MCF 10A (cell line): ENCODE measurements at regions of chr20 and their contacts with region 1.

Region 1: GRCh38 chr20:62772990-62773844 is 23.1 kb upstream of the MRGBP start:
- DNase-seq: peak; percentile 96
- H3K4me3 Mint-ChIP-seq: peak overlapping the region; percentile 58
- H3K27ac Mint-ChIP-seq: peak overlapping the region; percentile 84
- H3K4me1 Mint-ChIP-seq: peaks cover 41% of the 10 kb centered on the region
- H3K27me3 Mint-ChIP-seq: no peaks in the 10 kb centered on the region
- CTCF ChIP-seq: no peak

Region 2: GRCh38 chr20:62476056-62476838 is 297.0 kb before region 1 on chr20:
- CTCF ChIA-PET with region 1: no interaction called
- POLR2A ChIA-PET with region 1: no interaction called
- intact Hi-C with region 1: no loop called
- DNase-seq: no peak
- H3K4me3 Mint-ChIP-seq: no peak overlapping the region
- H3K27ac Mint-ChIP-seq: no peak overlapping the region
- H3K4me1 Mint-ChIP-seq: no peaks in the 10 kb centered on the region
- H3K27me3 Mint-ChIP-seq: peaks cover 39% of the 10 kb centered on the region
- CTCF ChIP-seq: no peak

Region 3: GRCh38 chr20:62652051-62652926 is 120.9 kb before region 1 on chr20:
- CTCF ChIA-PET with region 1: no interaction called
- POLR2A ChIA-PET with region 1: interaction called, 21 read pairs
- intact Hi-C with region 1: no loop called
- DNase-seq: peak; percentile 99
- H3K4me3 Mint-ChIP-seq: peak overlapping the region; percentile 72
- H3K27ac Mint-ChIP-seq: peak overlapping the region; percentile 98
- H3K4me1 Mint-ChIP-seq: peaks cover 11% of the 10 kb centered on the region
- H3K27me3 Mint-ChIP-seq: no peaks in the 10 kb centered on the region
- CTCF ChIP-seq: no peak

Region 4: DNA sequence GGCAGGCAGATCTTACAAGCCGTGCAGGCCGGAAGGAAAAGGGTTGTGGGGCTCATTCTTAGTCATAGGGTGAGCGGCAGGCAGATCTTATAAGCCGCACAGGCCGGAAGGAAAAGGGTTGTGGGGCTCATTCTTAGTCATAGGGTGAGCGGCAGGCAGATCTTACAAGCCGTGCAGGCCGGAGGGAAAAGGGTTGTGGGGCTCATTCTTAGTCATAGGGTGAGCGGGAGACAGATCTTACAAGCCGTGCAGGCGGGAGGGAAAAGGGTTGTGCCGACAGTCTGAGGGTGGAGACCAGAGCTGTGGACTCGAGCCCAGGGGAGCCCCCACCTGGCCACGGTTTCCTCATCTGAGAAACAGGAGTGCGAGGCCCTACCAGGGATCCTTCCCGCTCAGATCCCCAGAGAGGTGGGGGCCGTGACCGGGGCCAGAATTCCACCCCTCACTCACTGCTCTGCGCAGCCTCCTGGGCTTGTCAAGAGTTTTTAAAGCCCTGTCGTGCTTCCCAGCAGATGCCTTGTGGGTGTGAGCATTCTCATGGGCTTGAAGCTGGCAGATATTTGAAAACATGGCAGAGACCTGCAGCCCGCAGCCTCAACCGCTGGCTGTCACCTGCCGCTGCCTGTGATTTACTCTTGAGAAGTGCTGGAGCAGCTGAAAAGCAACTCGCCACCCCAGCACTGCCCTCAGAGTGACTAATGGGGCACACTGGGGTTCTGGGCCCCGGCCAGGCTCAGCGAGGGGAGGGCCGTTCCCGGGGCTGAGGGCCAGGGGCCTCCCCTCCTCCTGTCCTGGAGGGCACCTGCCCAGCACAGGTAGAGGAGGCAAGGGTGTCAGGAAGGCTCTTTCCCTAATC is 32.7 kb before region 1 on chr20:
- CTCF ChIA-PET with region 1: interaction called, 4 read pairs
- POLR2A ChIA-PET with region 1: interaction called, 49 read pairs
- intact Hi-C with region 1: no loop called
- DNase-seq: peak; percentile 96
- H3K4me3 Mint-ChIP-seq: peak overlapping the region; percentile 71
- H3K27ac Mint-ChIP-seq: peak overlapping the region; percentile 67
- H3K4me1 Mint-ChIP-seq: peaks cover 20% of the 10 kb centered on the region
- H3K27me3 Mint-ChIP-seq: no peaks in the 10 kb centered on the region
- CTCF ChIP-seq: no peak

Region 5: DNA sequence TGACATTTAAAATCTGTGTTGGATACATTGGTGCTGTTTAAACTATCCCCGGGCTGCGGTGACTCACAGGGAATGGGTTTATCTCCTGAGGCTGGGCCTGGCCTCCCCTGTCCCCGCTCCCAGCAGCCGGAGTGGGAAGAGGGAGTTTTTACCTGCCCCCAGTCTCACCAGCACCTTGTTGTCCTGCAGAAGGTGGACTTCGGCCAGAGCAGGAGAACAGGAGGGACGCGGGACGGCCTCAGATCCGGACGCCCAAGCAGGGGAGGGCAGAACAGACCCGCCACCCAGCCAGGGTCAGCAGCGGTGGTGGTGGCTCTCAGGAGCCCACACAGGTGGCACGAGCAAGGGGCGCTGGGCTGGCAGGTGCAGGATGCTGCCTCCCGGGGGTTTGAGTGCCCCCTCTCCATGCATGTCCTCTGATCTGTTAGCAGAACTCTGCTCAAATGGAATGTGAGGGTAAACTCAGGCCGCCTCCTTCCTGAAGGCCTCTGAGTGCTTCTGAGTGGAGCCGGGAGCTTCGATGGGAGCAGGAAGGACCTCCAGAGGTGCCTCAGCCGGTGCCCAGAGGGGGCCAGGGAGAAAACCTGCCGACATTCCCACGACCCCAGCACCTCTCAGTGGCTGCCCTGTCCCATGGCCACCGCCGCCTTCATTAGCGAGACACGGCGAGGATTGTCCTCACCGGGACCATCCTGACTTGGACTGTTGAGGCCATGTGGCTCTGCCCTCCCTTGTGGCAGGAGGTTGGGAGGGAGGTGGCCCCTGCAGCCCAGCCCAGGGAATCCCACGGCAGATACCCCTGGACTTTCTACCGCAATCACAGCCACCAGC is 20.3 kb before region 1 on chr20:
- CTCF ChIA-PET with region 1: interaction called, 4 read pairs
- POLR2A ChIA-PET with region 1: interaction called, 12 read pairs
- intact Hi-C with region 1: no loop called
- DNase-seq: no peak
- H3K4me3 Mint-ChIP-seq: no peak overlapping the region
- H3K27ac Mint-ChIP-seq: no peak overlapping the region
- H3K4me1 Mint-ChIP-seq: no peaks in the 10 kb centered on the region
- H3K27me3 Mint-ChIP-seq: no peaks in the 10 kb centered on the region
- CTCF ChIP-seq: no peak

Region 6: DNA sequence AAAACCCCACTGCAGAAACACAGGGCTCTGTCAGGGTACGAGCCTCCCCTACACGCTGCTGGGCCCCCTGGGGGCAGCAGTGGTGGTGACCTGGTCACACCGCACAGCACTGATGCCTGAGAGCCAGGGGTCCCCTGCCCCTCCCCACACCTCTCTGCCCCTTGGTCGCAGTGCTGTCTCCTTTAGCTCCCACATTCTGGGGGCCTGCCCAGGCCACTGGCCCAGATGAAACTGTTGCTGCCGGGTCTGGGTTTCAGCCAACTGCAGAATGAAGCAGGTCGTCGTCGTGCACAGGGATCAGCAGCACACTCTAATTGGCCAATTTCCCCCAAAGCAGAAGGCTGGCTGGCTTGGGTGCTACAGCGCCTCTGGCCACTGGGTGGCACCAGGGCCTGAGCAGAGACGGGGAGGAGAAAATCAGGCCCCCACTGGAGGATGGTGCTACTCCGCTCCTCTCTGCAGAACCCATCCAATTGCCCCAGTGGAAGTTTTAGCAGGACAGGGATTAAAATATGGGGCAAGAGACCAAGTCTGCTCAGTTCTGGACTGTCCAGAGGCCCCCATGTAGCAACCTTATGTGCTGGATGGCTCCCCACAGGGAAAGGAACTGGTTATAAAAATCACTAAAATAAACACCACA is 127.0 kb after region 1 on chr20:
- CTCF ChIA-PET with region 1: no interaction called
- POLR2A ChIA-PET with region 1: no interaction called
- intact Hi-C with region 1: no loop called
- DNase-seq: peak; percentile 67
- H3K4me3 Mint-ChIP-seq: no peak overlapping the region
- H3K27ac Mint-ChIP-seq: no peak overlapping the region
- H3K4me1 Mint-ChIP-seq: no peaks in the 10 kb centered on the region
- H3K27me3 Mint-ChIP-seq: no peaks in the 10 kb centered on the region
- CTCF ChIP-seq: peak; percentile 75